GM12878 (cell line): ENCODE measurements at regions of chr15 and their contacts with region 1.

Region 1: GRCh38 chr15:83248151-83249029 is 36.1 kb downstream of the BNC1 start:
- DNase-seq: peak; percentile 24
- ATAC-seq: peak; percentile 85
- H3K4me3 ChIP-seq: no peak overlapping the region
- H3K27ac ChIP-seq: no peak overlapping the region
- H3K4me1 ChIP-seq: no peaks in the 10 kb centered on the region
- H3K27me3 ChIP-seq: no peaks in the 10 kb centered on the region; a peak in 2 of 4 replicates
- CTCF ChIP-seq: peak; percentile 70 to 87 (median 81); a peak in 5 of 6 replicates
- EP300 ChIP-seq: no peak
- POLR2A ChIP-seq: no peak
- RAD21 ChIP-seq: peak; percentile 86

Region 2: GRCh38 chr15:83144189-83144588 is 104.2 kb before region 1 on chr15:
- CTCF ChIA-PET with region 1: no interaction called
- POLR2A ChIA-PET with region 1: no interaction called
- RAD21 ChIA-PET with region 1: no interaction called
- SMC1A ChIA-PET with region 1: no interaction called
- in situ Hi-C with region 1: no loop called
- intact Hi-C with region 1: no loop called
- DNase-seq: no peak
- ATAC-seq: no peak
- H3K4me3 ChIP-seq: no peak overlapping the region
- H3K27ac ChIP-seq: no peak overlapping the region
- H3K4me1 ChIP-seq: no peaks in the 10 kb centered on the region
- H3K27me3 ChIP-seq: no peaks in the 10 kb centered on the region
- CTCF ChIP-seq: no peak
- EP300 ChIP-seq: no peak
- POLR2A ChIP-seq: no peak
- RAD21 ChIP-seq: no peak

Region 3: DNA sequence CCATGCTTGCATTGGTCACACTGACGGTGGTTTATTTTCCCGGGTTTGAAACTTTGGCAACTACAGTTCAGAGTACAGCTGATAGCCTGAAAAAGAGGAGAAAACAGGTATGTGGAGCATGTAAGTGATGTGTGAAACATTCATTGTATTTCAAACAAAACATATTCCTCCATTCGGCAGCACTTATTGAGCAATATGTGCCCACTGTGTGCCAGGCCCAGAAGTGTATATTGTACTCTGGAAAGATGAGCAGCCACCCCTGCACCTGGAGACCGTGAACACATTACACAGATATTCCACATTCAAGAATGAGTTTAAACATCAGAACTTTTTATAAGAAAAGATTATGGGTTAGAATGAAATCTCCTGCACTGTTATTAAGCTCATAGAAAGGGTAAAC is 19.8 kb after region 1 on chr15:
- CTCF ChIA-PET with region 1: interaction called, 13 read pairs
- POLR2A ChIA-PET with region 1: no interaction called
- RAD21 ChIA-PET with region 1: no interaction called
- SMC1A ChIA-PET with region 1: interaction called, 4 read pairs
- in situ Hi-C with region 1: no loop called
- intact Hi-C with region 1: no loop called
- DNase-seq: no peak
- ATAC-seq: no peak
- H3K4me3 ChIP-seq: no peak overlapping the region
- H3K27ac ChIP-seq: no peak overlapping the region
- H3K4me1 ChIP-seq: no peaks in the 10 kb centered on the region
- H3K27me3 ChIP-seq: no peaks in the 10 kb centered on the region; a peak in 2 of 4 replicates
- CTCF ChIP-seq: no peak
- EP300 ChIP-seq: no peak
- POLR2A ChIP-seq: no peak
- RAD21 ChIP-seq: no peak

Region 4: GRCh38 chr15:83323296-83323711 is 74.9 kb after region 1 on chr15:
- CTCF ChIA-PET with region 1: no interaction called
- POLR2A ChIA-PET with region 1: no interaction called
- RAD21 ChIA-PET with region 1: no interaction called
- SMC1A ChIA-PET with region 1: no interaction called
- in situ Hi-C with region 1: no loop called
- intact Hi-C with region 1: no loop called
- DNase-seq: no peak
- ATAC-seq: peak; percentile 76
- H3K4me3 ChIP-seq: no peak overlapping the region
- H3K27ac ChIP-seq: no peak overlapping the region
- H3K4me1 ChIP-seq: no peaks in the 10 kb centered on the region
- H3K27me3 ChIP-seq: no peaks in the 10 kb centered on the region
- CTCF ChIP-seq: no peak
- EP300 ChIP-seq: no peak
- POLR2A ChIP-seq: no peak
- RAD21 ChIP-seq: no peak

Region 5: DNA sequence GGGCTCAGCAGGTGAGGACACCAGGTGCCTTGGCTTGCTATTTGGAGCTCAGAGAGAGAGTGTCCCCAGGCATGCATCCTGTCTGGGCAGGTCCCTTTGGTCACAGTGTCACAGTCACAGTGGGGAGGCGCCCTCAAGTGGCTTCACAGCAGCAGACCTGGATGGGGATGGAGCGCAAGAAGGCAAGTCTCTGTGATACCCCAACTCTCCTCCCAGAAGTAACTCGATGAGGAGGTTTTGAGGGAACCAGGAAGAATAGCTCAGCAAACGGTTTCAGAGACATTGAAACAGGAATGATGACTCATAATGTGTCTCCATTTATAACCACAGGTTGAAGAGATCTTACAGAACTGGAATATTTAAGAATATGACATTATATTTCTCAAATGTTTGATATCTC is 132.3 kb after region 1 on chr15:
- CTCF ChIA-PET with region 1: interaction called, 32 read pairs
- POLR2A ChIA-PET with region 1: interaction called, 3 read pairs
- RAD21 ChIA-PET with region 1: interaction called, 11 read pairs
- SMC1A ChIA-PET with region 1: interaction called, 24 read pairs
- in situ Hi-C with region 1: loop called (anchors 10 kb)
- intact Hi-C with region 1: loop called (anchors 1 kb)
- DNase-seq: peak; percentile 13
- ATAC-seq: peak; percentile 98
- H3K4me3 ChIP-seq: no peak overlapping the region
- H3K27ac ChIP-seq: no peak overlapping the region
- H3K4me1 ChIP-seq: peaks cover 5% of the 10 kb centered on the region
- H3K27me3 ChIP-seq: peaks cover 0 to 6% of the 10 kb centered on the region in 2 experiments; a peak in 3 of 4 replicates
- CTCF ChIP-seq: peak; percentile 68 to 76 (median 74)
- EP300 ChIP-seq: no peak
- POLR2A ChIP-seq: no peak
- RAD21 ChIP-seq: peak; percentile 73

Region 6: DNA sequence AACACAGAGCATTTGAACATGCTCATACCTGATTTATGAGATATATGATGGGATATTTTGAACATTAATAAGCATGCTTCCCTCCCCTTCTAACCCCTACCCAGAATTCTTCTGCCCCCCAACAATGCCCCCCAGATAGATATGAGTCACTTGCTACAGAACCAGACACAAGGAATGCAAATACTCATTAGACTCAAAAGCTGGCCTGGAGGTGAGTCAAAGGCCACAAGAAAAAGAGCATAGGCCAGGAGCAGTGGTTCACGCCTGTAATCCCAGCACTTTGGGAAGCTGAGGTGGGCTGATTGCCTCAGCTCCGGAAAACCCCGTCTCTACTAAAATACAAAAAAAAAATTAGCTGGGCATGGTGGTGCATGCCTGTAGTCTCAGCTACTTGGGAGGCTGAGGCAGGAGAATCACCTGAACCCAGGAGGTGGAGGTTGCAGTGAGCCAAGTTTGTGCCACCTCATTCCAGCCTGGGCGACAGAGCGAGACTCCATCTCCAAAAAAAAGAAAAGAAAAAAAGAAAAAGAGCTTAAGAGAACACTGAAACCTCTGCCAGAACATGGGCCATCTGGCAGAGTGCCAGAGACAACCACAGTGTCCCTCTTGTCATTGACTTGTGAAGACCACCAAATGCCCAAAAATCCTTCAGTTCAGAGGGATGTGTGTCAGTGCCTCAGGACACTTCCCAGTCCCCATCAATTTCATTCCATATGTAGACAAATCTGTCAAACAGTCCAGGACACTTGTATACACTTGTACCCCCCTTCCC is 194.9 kb after region 1 on chr15:
- CTCF ChIA-PET with region 1: interaction called, 26 read pairs
- POLR2A ChIA-PET with region 1: no interaction called
- RAD21 ChIA-PET with region 1: interaction called, 21 read pairs
- SMC1A ChIA-PET with region 1: interaction called, 11 read pairs
- in situ Hi-C with region 1: no loop called
- intact Hi-C with region 1: no loop called
- DNase-seq: no peak
- ATAC-seq: no peak
- H3K4me3 ChIP-seq: no peak overlapping the region
- H3K27ac ChIP-seq: no peak overlapping the region
- H3K4me1 ChIP-seq: no peaks in the 10 kb centered on the region
- H3K27me3 ChIP-seq: peaks cover 0 to 4% of the 10 kb centered on the region in 2 experiments; a peak in 1 of 4 replicates
- CTCF ChIP-seq: no peak
- EP300 ChIP-seq: no peak
- POLR2A ChIP-seq: no peak
- RAD21 ChIP-seq: no peak

Region 7: DNA sequence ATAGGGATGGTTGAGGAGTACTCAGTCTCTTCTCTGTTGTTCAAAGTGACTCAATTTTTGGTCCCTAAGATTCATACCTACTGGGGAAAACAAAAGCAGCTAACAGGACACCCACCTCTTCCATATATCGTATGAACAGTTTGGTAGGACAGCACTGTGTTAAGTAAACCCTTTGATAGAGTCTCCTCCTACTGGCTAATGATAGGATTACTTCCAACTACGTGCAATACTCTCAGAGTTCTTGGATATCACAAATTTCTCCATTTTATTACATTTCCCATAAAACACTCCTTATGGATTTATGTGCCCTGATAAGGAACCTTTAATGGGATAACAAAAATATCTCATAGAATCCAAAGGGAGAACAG is 787.0 kb after region 1 on chr15:
- CTCF ChIA-PET with region 1: interaction called, 4 read pairs
- POLR2A ChIA-PET with region 1: no interaction called
- RAD21 ChIA-PET with region 1: no interaction called
- SMC1A ChIA-PET with region 1: interaction called, 3 read pairs
- in situ Hi-C with region 1: loop called (anchors 10 kb)
- intact Hi-C with region 1: no loop called
- DNase-seq: no peak
- ATAC-seq: peak; percentile 93
- H3K4me3 ChIP-seq: no peak overlapping the region
- H3K27ac ChIP-seq: no peak overlapping the region
- H3K4me1 ChIP-seq: no peaks in the 10 kb centered on the region
- H3K27me3 ChIP-seq: no peaks in the 10 kb centered on the region
- CTCF ChIP-seq: peak; percentile 52 to 64 (median 64); a peak in 5 of 6 replicates
- EP300 ChIP-seq: no peak
- POLR2A ChIP-seq: no peak
- RAD21 ChIP-seq: peak; percentile 78